Sigmoid colon (tissue), 7 donors: ENCODE measurements at regions of chr1 and their contacts with region 1.

Region 1: GRCh38 chr1:117685936-117686806 is 80.3 kb downstream of the TENT5C start:
- DNase-seq: no peak
- H3K4me3 ChIP-seq: no peak overlapping the region
- H3K27ac ChIP-seq: peak overlapping the region in 3 of 4 donors; percentile 38 to 63 (median 52)
- H3K4me1 ChIP-seq: peaks cover 3 to 64% (median 58%) of the 10 kb centered on the region in 4 donors
- H3K27me3 ChIP-seq: no peaks in the 10 kb centered on the region
- CTCF ChIP-seq: no peak
- EP300 ChIP-seq: no peak
- POLR2A ChIP-seq: no peak

Region 2: DNA sequence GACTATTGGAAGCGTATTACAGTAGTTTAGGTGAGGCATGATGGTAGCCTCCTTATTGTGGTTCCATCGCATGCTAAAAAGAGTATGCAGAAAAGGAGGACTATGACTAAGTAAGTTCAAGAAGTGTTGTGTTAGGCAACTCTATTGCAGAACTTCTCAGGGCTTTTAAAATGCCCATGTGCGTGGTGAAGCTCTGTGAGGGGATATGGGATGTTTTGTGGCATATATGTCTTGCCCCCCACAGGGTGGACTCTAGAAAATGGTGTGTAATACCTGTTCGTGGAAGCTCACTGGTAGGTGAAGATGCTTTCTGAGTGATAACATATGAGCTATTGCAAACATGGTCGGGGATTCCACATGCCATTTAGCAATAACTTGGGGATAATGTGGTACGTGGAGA is 287.2 kb before region 1 on chr1:
- intact Hi-C with region 1: no loop called
- DNase-seq: no peak
- H3K4me3 ChIP-seq: no peak overlapping the region
- H3K27ac ChIP-seq: no peak overlapping the region
- H3K4me1 ChIP-seq: peaks cover 0 to 16% (median 0%) of the 10 kb centered on the region in 4 donors
- H3K27me3 ChIP-seq: no peaks in the 10 kb centered on the region
- CTCF ChIP-seq: no peak
- EP300 ChIP-seq: no peak
- POLR2A ChIP-seq: no peak

Region 3: DNA sequence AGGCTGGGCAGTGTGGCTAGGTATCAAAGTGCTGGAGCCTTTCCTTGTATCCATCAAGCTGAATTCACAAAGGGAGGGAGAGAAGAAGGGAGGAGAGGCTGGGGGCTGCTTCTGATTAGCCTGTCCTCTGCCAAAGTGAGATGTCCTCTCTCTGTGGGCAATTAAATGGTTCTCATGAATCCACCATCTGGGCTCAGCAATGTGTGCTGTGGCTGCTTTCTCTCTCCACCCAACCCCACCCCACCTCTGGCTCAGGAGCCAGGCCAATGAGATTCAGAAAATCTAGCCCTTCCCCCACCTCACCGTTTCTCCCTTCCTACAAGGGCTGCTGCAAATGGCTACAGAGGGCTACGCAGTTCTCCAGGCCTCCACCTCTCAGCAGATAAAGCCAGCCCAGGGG is 74.3 kb after region 1 on chr1:
- intact Hi-C with region 1: no loop called
- DNase-seq: no peak
- H3K4me3 ChIP-seq: no peak overlapping the region
- H3K27ac ChIP-seq: no peak overlapping the region
- H3K4me1 ChIP-seq: peaks cover 0 to 9% (median 9%) of the 10 kb centered on the region in 4 donors
- H3K27me3 ChIP-seq: no peaks in the 10 kb centered on the region
- CTCF ChIP-seq: no peak
- EP300 ChIP-seq: no peak
- POLR2A ChIP-seq: no peak

Region 4: DNA sequence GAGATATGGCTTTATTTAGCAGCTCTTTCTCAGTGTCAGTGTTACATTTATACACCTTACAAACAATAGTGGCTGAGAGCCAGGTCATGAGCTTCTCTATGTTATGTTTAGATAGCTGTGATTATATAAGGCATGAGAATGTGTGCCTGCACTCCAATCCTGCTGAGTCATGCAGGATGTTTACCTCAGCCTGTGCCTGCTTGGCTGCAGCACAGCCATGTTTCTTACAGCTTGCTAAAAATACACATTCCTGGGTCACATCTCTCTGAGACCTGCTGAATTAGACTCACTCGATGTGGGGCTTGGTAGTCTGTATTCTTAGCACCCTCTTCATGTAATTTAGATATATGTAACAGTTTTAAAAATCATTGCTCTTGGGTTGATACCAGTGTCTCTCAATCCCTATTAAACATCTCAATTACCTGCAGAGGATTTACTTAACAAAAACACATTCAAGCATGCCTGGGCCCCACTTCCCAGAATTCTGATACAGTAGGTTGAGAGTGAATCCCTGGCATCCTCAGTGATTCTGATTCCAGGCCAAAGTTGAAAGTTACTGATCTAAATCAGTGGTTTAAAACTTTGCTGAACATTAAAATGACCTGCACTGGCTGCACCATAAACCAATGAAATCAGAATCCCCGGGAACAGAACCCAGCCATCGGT is 135.7 kb after region 1 on chr1:
- intact Hi-C with region 1: loop called (anchors 10 kb)
- DNase-seq: peak; percentile 82
- H3K4me3 ChIP-seq: no peak overlapping the region
- H3K27ac ChIP-seq: peak overlapping the region; percentile 78 to 86 (median 82)
- H3K4me1 ChIP-seq: peaks cover 0 to 57% (median 41%) of the 10 kb centered on the region in 4 donors
- H3K27me3 ChIP-seq: no peaks in the 10 kb centered on the region
- CTCF ChIP-seq: no peak
- EP300 ChIP-seq: peak in 3 of 4 donors; percentile 33 to 84 (median 70)
- POLR2A ChIP-seq: no peak